Adrenal gland (tissue), 19 donors: ENCODE measurements at regions of chr18 and their contacts with region 1.

Region 1: DNA sequence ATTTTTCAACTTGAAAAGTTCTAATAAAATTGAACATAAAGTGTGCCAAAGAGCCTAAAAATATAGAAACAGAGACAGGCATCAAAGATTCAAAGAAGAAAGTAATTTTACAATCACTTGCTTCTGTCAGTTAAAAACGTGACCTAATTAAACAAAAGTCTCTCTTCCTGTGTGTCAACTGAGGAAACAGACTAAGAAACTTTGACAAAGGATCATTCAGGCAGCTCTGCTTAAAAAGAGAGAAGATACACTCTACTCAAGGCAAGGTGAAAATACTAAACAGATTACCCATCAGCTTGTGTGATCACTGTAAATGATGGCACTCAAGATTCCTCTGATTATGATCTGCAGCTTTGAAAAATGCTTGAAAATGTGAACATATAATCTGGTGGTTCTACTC is 47.8 kb downstream of the DYM start:
- DNase-seq: no peak
- H3K4me3 ChIP-seq: no peak overlapping the region
- H3K27ac ChIP-seq: no peak overlapping the region
- H3K4me1 ChIP-seq: peaks cover 5 to 8% of the 10 kb centered on the region in 2 donors
- H3K27me3 ChIP-seq: no peaks in the 10 kb centered on the region
- CTCF ChIP-seq: no peak
- POLR2A ChIP-seq: no peak

Region 2: GRCh38 chr18:49021433-49022129 is 391.1 kb before region 1 on chr18:
- intact Hi-C with region 1: loop called in 1 of 2 experiments (anchors 10 kb)
- DNase-seq: peak; percentile 44 to 70 (median 66)
- H3K4me3 ChIP-seq: no peak overlapping the region
- H3K27ac ChIP-seq: no peak overlapping the region
- H3K4me1 ChIP-seq: peaks cover 0 to 2% of the 10 kb centered on the region in 2 donors
- H3K27me3 ChIP-seq: no peaks in the 10 kb centered on the region
- CTCF ChIP-seq: peak; percentile 16 to 70 (median 47)
- POLR2A ChIP-seq: no peak

Region 3: GRCh38 chr18:49123431-49123830 is 289.2 kb before region 1 on chr18:
- intact Hi-C with region 1: no loop called
- DNase-seq: no peak
- H3K4me3 ChIP-seq: no peak overlapping the region
- H3K27ac ChIP-seq: no peak overlapping the region
- H3K4me1 ChIP-seq: no peaks in the 10 kb centered on the region
- H3K27me3 ChIP-seq: no peaks in the 10 kb centered on the region
- CTCF ChIP-seq: no peak
- POLR2A ChIP-seq: no peak

Region 4: DNA sequence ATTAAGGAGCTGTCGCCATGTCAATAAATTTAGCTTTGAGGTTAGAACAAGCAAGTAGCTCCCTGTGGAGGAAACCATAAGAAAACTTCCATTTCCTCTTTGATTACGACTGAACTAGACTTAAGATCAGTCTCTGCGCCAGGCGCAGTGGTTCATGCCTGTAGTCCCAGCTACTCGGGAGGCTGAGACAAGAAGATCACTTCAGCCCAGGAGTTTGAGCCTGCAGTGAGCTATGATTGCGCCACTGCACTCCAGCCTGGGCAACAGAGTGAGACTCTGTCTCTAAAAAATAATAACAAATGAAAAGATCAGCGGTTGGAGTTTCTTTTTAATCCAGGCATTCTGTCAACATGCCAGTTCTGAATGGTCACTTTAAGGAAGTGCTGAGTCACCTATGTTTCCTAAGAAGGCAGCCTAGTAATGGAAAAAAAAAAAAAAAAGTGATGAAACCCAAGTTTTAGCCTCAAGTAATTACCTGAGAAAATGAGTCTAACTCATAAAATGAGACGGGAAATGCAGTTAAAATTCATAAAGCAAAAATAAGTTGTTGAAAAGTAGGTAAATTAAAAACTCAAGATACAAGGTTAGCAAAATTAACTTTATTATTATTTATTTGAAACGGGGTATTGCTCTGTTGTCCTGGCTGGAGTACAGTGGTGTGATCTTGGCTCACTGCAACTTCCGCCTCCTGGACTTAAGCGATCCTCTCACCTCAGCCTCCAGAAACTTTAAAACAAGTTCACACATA is 64.2 kb after region 1 on chr18:
- intact Hi-C with region 1: no loop called
- DNase-seq: peak in 4 of 7 donors; percentile 19 to 40 (median 28)
- H3K4me3 ChIP-seq: peak overlapping the region in 1 of 4 donors; percentile 16
- H3K27ac ChIP-seq: peak overlapping the region in 3 of 5 donors; percentile 21 to 75 (median 70)
- H3K4me1 ChIP-seq: peaks cover 12 to 15% of the 10 kb centered on the region in 2 donors
- H3K27me3 ChIP-seq: no peaks in the 10 kb centered on the region
- CTCF ChIP-seq: no peak
- POLR2A ChIP-seq: no peak